Panc1 (cell line): ENCODE measurements at regions of chr6 and their contacts with region 1.

Region 1: GRCh38 chr6:3518356-3519225 is 61.7 kb upstream of the SLC22A23 start:
- DNase-seq: no peak
- ATAC-seq: peak; percentile 66; the same call in 1 of the 2 replicates
- H3K4me3 ChIP-seq: no peak overlapping the region
- H3K27ac ChIP-seq: no peak overlapping the region
- H3K4me1 ChIP-seq: no peaks in the 10 kb centered on the region
- H3K27me3 ChIP-seq: peaks cover 5% of the 10 kb centered on the region
- CTCF ChIP-seq: no peak

Region 2: GRCh38 chr6:3361312-3362037 is 157.1 kb before region 1 on chr6:
- CTCF ChIA-PET with region 1: interaction called, 11 read pairs
- POLR2A ChIA-PET with region 1: no interaction called
- in situ Hi-C with region 1: no loop called
- intact Hi-C with region 1: no loop called
- DNase-seq: no peak
- ATAC-seq: no peak
- H3K4me3 ChIP-seq: no peak overlapping the region
- H3K27ac ChIP-seq: no peak overlapping the region
- H3K4me1 ChIP-seq: peaks cover 12% of the 10 kb centered on the region
- H3K27me3 ChIP-seq: peaks cover 2% of the 10 kb centered on the region; the same call in 1 of the 2 replicates
- CTCF ChIP-seq: no peak

Region 3: GRCh38 chr6:3707024-3707423 is 188.4 kb after region 1 on chr6:
- CTCF ChIA-PET with region 1: no interaction called
- POLR2A ChIA-PET with region 1: interaction called, 11 read pairs
- in situ Hi-C with region 1: no loop called
- intact Hi-C with region 1: no loop called
- DNase-seq: no peak
- ATAC-seq: no peak
- H3K4me3 ChIP-seq: no peak overlapping the region
- H3K27ac ChIP-seq: no peak overlapping the region
- H3K4me1 ChIP-seq: no peaks in the 10 kb centered on the region
- H3K27me3 ChIP-seq: no peaks in the 10 kb centered on the region; the same call in 1 of the 2 replicates
- CTCF ChIP-seq: no peak